ENCODE measurements at regions of chr14 and their contacts with region 1.

Region 1: GRCh38 chr14:73759714-73760597 is 45.8 kb upstream of the PNMA1 start:
- DNase-seq: peak; percentile 96
- H3K4me3 ChIP-seq: peak overlapping the region; percentile 78
- H3K27ac ChIP-seq: peak overlapping the region; percentile 88
- H3K4me1 ChIP-seq: peaks cover 77% of the 10 kb centered on the region
- CTCF ChIP-seq: peak; percentile 37

Region 2: GRCh38 chr14:73613046-73613383 is 146.9 kb before region 1 on chr14:
- CTCF ChIA-PET with region 1: no interaction called
- POLR2A ChIA-PET with region 1: no interaction called
- intact Hi-C with region 1: no loop called
- DNase-seq: no peak
- H3K4me3 ChIP-seq: no peak overlapping the region
- H3K27ac ChIP-seq: no peak overlapping the region
- H3K4me1 ChIP-seq: no peaks in the 10 kb centered on the region
- CTCF ChIP-seq: no peak

Region 3: GRCh38 chr14:73728717-73729330 is 31.1 kb before region 1 on chr14:
- CTCF ChIA-PET with region 1: interaction called, 10 read pairs
- POLR2A ChIA-PET with region 1: no interaction called
- intact Hi-C with region 1: loop called (anchors 1 kb)
- DNase-seq: peak; percentile 87
- H3K4me3 ChIP-seq: no peak overlapping the region
- H3K27ac ChIP-seq: peak overlapping the region; percentile 34
- H3K4me1 ChIP-seq: peaks cover 9% of the 10 kb centered on the region
- CTCF ChIP-seq: peak; percentile 97

Region 4: DNA sequence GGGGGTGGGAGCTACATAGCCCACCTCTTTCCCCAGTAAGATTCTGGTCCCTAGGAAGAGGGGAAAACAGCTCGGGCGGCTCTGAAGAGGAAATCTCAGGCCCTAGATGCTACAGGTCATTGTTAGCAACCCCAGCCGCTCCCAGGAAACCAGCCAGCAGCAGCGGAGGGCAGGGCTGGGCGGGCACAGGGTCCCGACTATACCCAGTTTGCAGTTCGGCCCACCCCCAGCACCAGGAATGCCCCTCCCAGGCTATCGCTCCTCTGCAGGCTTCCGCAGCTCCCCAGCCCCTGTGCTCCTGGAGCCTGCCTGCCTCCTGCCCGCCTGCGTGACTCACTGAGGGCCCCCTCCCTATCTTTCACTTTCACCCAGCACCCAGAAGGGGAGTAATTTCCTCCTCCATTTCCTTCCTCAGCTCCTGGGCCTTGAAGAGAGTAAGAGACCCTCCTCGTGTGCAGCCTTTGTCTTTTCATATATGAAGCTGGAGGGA is 18.5 kb before region 1 on chr14:
- CTCF ChIA-PET with region 1: interaction called, 5 read pairs
- POLR2A ChIA-PET with region 1: interaction called, 17 read pairs
- intact Hi-C with region 1: no loop called
- DNase-seq: peak; percentile 54
- H3K4me3 ChIP-seq: peak overlapping the region; percentile 58
- H3K27ac ChIP-seq: peak overlapping the region; percentile 70
- H3K4me1 ChIP-seq: peaks cover 58% of the 10 kb centered on the region
- CTCF ChIP-seq: no peak

Region 5: GRCh38 chr14:73771848-73772638 is 12.1 kb after region 1 on chr14:
- CTCF ChIA-PET with region 1: interaction called, 4 read pairs
- POLR2A ChIA-PET with region 1: interaction called, 53 read pairs
- intact Hi-C with region 1: loop called (anchors 1 kb)
- DNase-seq: peak; percentile 95
- H3K4me3 ChIP-seq: peak overlapping the region; percentile 49
- H3K27ac ChIP-seq: peak overlapping the region; percentile 96
- H3K4me1 ChIP-seq: peaks cover 100% of the 10 kb centered on the region
- CTCF ChIP-seq: no peak

Region 6: DNA sequence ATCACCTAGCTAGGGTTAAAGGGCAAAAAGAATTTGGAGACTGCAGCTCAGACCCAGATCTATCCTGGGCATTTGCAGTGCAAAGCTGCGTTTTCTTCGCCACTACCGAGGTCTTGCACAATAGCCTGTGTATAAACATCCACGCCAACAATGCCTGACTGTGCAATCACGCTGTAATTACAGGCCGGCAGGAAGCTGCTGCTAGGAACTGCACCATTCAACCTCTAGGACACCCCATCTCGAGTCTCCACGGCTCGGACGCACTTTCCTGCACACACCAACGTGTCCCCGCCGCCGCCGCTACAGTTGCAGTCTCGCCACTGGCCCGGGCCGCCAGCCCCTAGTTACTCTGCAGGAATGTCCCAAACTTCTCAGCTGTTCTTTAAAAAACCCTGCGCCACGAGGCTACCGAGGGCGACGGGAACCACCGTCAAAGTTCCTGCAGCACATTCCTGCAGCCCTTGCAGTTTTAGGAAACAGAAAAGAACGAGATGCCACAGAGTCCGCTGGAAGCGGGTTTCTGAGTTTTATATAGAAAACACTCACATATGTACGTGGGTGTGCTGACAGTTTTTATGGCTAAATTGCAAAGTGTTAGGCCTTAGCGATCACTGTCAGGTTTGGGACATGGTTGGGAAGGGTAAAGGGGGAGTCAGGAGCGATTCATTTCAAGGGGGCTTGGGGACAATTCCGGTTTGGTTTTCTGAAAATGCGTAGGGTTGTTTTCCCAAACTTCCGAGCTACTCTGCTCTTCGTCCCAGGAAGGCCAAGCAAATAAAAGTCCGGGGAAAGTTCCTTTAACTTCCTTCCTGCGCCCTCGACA is 26.1 kb after region 1 on chr14:
- CTCF ChIA-PET with region 1: interaction called, 7 read pairs
- POLR2A ChIA-PET with region 1: interaction called, 21 read pairs
- intact Hi-C with region 1: loop called (anchors 1 kb)
- DNase-seq: peak; percentile 83
- H3K4me3 ChIP-seq: peak overlapping the region; percentile 72
- H3K27ac ChIP-seq: peak overlapping the region; percentile 80
- H3K4me1 ChIP-seq: peaks cover 61% of the 10 kb centered on the region
- CTCF ChIP-seq: 0 out of 2 replicates have a peak, but pooled peaks have one; percentile 29

Region 7: DNA sequence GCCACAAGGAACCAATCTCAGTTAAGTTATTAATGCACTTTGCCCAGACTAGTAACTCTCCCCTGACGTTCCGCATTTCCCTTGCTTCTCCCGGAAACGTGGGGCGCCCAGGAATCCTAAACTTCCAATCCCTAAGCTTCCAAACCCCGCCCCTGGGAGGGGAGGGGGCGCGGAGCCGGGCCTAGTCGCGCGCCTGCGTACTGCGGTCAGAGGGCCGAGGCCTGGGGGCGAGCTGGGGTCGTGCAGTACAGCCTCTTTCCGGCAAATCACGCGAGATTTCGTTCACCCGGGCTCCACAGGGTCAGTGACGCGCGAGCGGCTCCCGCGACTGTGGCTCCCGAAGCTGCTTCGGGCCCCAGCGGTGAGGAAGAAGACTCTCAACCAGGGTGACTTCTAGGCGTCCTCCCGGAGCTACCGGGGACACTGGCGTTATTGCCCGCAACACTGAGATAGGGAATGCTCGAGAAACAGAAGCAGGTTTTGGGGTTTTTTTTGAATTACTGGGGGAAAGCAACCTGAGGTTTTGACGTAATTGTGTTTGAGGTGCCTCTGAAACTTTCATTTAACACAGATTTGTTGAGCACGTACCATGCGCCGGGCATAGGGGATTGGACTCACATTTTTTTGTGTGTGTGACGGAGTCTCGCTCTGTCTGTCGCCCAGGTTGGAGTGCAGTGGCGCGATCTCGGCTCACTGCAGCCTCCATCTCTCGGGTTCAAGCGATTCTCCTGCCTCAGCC is 91.9 kb after region 1 on chr14 and contains the start of gene PTGR2:
- CTCF ChIA-PET with region 1: no interaction called
- POLR2A ChIA-PET with region 1: no interaction called
- intact Hi-C with region 1: no loop called
- DNase-seq: peak; percentile 96
- H3K4me3 ChIP-seq: peak within 1 kb of the TSS; percentile 73
- H3K27ac ChIP-seq: peak within 1 kb of the TSS; percentile 64
- H3K4me1 ChIP-seq: peaks cover 17% of the 10 kb centered on the region
- CTCF ChIP-seq: no peak
- total RNA-seq, gene PTGR2: 6.4 and 6.6 TPM in 2 replicates